Endothelial cell of umbilical vein (primary cell): ENCODE measurements at regions of chrX and their contacts with region 1.

Region 1: GRCh38 chrX:39309018-39309635 is 507.9 kb downstream of the MID1IP1 start:
- DNase-seq: peak; percentile 88
- H3K4me3 ChIP-seq: peak overlapping the region in 1 of 3 experiments; percentile 20
- H3K27ac ChIP-seq: peak overlapping the region; percentile 84
- H3K4me1 ChIP-seq: peaks cover 37% of the 10 kb centered on the region
- H3K27me3 ChIP-seq: no peaks in the 10 kb centered on the region
- CTCF ChIP-seq: no peak
- POLR2A ChIP-seq: no peak

Region 2: DNA sequence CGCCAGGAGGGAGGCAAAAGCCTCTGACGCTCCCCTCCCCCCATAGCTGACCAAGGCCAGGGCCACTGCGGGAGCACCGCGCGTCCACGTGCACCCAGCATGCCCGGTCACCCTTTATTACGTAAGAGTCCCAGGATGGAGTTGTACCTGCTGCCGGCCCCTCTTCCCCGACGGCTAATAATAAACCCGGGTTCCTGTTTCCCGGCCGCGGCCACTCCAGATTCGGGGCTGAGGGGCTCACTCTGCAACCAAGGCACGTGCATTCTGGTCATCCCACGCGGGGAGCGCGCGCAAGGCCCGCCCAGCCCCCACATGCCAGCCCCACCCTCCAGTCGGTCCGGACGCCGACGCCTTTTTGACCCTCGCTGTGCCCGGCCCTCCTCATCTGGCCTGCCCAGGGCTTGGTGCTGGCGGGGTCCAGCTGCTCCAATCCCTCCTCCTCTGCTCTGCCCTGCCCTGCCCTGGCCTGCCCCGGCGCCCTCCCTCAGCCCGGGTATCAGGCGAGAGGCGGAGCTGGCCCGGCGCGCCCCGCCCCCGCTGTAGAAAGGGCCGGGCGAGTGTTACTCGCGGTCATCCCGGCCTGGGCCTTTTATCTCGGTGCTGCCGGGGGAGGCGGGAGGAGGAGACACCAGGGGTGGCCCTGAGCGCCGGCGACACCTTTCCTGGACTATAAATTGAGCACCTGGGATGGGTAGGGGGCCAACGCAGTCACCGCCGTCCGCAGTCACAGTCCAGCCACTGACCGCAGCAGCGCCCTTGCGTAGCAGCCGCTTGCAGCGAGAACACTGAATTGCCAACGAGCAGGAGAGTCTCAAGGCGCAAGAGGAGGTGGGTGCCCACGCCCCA is 505.3 kb before region 1 on chrX:
- CTCF ChIA-PET with region 1: no interaction called
- POLR2A ChIA-PET with region 1: no interaction called
- dilution Hi-C with region 1: no loop called
- intact Hi-C with region 1: loop called (anchors 5 kb)
- DNase-seq: peak; percentile 67
- H3K4me3 ChIP-seq: peak overlapping the region; percentile 52 to 85 (median 55)
- H3K27ac ChIP-seq: peak overlapping the region; percentile 82
- H3K4me1 ChIP-seq: peaks cover 15% of the 10 kb centered on the region
- H3K27me3 ChIP-seq: no peaks in the 10 kb centered on the region
- CTCF ChIP-seq: no peak
- POLR2A ChIP-seq: peak; percentile 37

Region 3: GRCh38 chrX:39204945-39205344 is 104.2 kb before region 1 on chrX:
- CTCF ChIA-PET with region 1: no interaction called
- POLR2A ChIA-PET with region 1: no interaction called
- dilution Hi-C with region 1: no loop called
- intact Hi-C with region 1: no loop called
- DNase-seq: no peak
- H3K4me3 ChIP-seq: no peak overlapping the region
- H3K27ac ChIP-seq: no peak overlapping the region
- H3K4me1 ChIP-seq: no peaks in the 10 kb centered on the region
- H3K27me3 ChIP-seq: no peaks in the 10 kb centered on the region
- CTCF ChIP-seq: no peak
- POLR2A ChIP-seq: no peak

Region 4: GRCh38 chrX:39227371-39227770 is 81.8 kb before region 1 on chrX:
- CTCF ChIA-PET with region 1: no interaction called
- POLR2A ChIA-PET with region 1: no interaction called
- dilution Hi-C with region 1: no loop called
- intact Hi-C with region 1: no loop called
- DNase-seq: no peak
- H3K4me3 ChIP-seq: no peak overlapping the region
- H3K27ac ChIP-seq: no peak overlapping the region
- H3K4me1 ChIP-seq: no peaks in the 10 kb centered on the region
- H3K27me3 ChIP-seq: no peaks in the 10 kb centered on the region
- CTCF ChIP-seq: no peak
- POLR2A ChIP-seq: no peak

Region 5: GRCh38 chrX:39261446-39262147 is 47.5 kb before region 1 on chrX:
- CTCF ChIA-PET with region 1: interaction called, 3 read pairs
- POLR2A ChIA-PET with region 1: no interaction called
- dilution Hi-C with region 1: no loop called
- intact Hi-C with region 1: loop called (anchors 1 kb)
- DNase-seq: peak; percentile 53
- H3K4me3 ChIP-seq: no peak overlapping the region
- H3K27ac ChIP-seq: no peak overlapping the region
- H3K4me1 ChIP-seq: no peaks in the 10 kb centered on the region
- H3K27me3 ChIP-seq: no peaks in the 10 kb centered on the region
- CTCF ChIP-seq: peak; percentile 34 to 44
- POLR2A ChIP-seq: no peak

Region 6: DNA sequence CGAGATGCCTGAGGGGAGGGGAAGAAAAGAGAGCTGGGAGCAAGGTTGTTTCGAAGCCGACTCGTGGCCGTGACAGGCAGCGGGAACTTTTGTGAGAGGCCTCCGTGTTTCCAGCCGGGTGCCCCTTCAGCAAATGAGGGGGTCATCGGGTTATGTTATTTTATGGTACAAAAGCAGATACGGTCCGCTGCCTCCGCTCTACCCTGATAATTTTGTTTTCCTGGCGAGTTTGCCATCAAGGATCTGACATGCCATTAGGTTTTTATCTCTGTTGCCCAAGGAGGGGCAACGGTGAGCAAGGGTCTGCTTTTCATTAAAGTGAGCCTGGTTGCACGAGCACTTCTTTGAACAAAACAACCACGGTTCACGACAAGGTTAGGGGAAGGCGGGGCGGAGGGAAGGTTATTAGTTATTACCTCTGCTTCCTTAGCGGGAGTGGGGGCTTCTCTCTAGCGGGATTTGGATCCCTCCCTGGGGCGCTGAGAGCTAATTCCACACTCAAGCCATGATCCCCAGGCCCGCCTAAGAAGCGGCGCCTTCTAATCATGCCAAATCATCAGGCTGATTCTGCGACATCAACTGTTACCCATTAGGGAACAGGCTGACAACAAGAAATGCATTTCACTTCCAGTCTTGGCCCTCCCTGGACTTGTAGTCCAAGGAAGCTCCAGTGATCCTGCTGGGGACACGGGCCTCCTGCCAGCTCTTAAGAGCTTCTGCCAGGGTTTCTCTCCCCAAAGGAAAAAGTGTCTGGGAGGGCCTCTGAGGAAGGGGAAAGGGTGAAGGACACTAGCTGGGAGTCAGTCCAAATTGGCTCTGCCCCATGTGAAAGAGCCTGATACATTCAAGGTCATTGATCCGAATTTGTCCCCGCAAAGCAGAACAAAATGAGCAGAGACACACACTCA is 109.9 kb after region 1 on chrX:
- CTCF ChIA-PET with region 1: no interaction called
- POLR2A ChIA-PET with region 1: no interaction called
- dilution Hi-C with region 1: no loop called
- intact Hi-C with region 1: loop called (anchors 1 kb)
- DNase-seq: peak; percentile 73
- H3K4me3 ChIP-seq: no peak overlapping the region
- H3K27ac ChIP-seq: peak overlapping the region; percentile 91
- H3K4me1 ChIP-seq: peaks cover 25% of the 10 kb centered on the region
- H3K27me3 ChIP-seq: no peaks in the 10 kb centered on the region
- CTCF ChIP-seq: no peak
- POLR2A ChIP-seq: no peak

Region 7: DNA sequence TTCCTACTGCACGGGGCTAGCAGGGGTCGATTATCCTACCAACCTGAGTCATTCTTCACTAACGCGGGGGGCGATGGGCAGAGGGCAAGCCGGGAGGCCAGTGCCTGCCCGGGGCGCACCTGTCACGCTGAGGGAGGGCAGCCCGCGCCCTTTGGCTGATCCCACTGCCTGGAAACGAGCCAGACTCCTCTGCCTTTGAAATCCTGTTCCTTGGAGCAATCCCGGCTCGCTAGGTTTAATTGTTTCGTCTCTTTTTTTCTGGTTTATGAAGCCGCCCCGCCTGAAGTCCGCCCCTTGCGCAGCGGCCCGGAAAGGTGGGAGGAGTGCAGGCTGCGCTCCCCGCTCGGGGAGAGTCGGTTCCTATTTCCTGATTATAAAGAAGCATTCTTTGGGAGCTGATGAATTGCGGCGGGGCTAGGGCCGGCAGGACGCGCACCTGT is 304.4 kb after region 1 on chrX:
- CTCF ChIA-PET with region 1: no interaction called
- POLR2A ChIA-PET with region 1: no interaction called
- dilution Hi-C with region 1: no loop called
- intact Hi-C with region 1: loop called (anchors 10 kb)
- DNase-seq: peak; percentile 48
- H3K4me3 ChIP-seq: peak overlapping the region; percentile 3 to 16 (median 7)
- H3K27ac ChIP-seq: no peak overlapping the region
- H3K4me1 ChIP-seq: peaks cover 4% of the 10 kb centered on the region
- H3K27me3 ChIP-seq: peaks cover 0 to 1% of the 10 kb centered on the region in 2 experiments
- CTCF ChIP-seq: no peak
- POLR2A ChIP-seq: no peak